ENCODE measurements at regions of chr1 and their contacts with region 1.

Region 1: GRCh38 chr1:111755331-111756123 is at the start of gene DDX20:
- DNase-seq: peak; percentile 95
- H3K4me3 ChIP-seq: peak within 1 kb of the TSS; percentile 58 to 87 (median 74)
- H3K27ac ChIP-seq: peak within 1 kb of the TSS; percentile 87 to 96 (median 89)
- H3K4me1 ChIP-seq: peaks cover 0 to 33% (median 22%) of the 10 kb centered on the region in 4 donors
- H3K27me3 ChIP-seq: no peaks in the 10 kb centered on the region
- CTCF ChIP-seq: peak; percentile 79 to 97 (median 86)
- EP300 ChIP-seq: no peak
- POLR2A ChIP-seq: peak; percentile 61
- total RNA-seq, gene DDX20: 7.1 to 17.1 (median 12.2) TPM

Region 2: GRCh38 chr1:111222308-111223125 is 533.0 kb before region 1 on chr1:
- in situ Hi-C with region 1: loop called in 2 of 4 experiments (anchors 10 to 25 kb)
- intact Hi-C with region 1: no loop called
- DNase-seq: peak; percentile 86
- H3K4me3 ChIP-seq: no peak overlapping the region
- H3K27ac ChIP-seq: peak overlapping the region; percentile 8 to 48 (median 10)
- H3K4me1 ChIP-seq: peaks cover 0 to 23% (median 6%) of the 10 kb centered on the region in 4 donors
- H3K27me3 ChIP-seq: no peaks in the 10 kb centered on the region
- CTCF ChIP-seq: peak; percentile 84 to 92 (median 90)
- EP300 ChIP-seq: no peak
- POLR2A ChIP-seq: no peak

Region 3: DNA sequence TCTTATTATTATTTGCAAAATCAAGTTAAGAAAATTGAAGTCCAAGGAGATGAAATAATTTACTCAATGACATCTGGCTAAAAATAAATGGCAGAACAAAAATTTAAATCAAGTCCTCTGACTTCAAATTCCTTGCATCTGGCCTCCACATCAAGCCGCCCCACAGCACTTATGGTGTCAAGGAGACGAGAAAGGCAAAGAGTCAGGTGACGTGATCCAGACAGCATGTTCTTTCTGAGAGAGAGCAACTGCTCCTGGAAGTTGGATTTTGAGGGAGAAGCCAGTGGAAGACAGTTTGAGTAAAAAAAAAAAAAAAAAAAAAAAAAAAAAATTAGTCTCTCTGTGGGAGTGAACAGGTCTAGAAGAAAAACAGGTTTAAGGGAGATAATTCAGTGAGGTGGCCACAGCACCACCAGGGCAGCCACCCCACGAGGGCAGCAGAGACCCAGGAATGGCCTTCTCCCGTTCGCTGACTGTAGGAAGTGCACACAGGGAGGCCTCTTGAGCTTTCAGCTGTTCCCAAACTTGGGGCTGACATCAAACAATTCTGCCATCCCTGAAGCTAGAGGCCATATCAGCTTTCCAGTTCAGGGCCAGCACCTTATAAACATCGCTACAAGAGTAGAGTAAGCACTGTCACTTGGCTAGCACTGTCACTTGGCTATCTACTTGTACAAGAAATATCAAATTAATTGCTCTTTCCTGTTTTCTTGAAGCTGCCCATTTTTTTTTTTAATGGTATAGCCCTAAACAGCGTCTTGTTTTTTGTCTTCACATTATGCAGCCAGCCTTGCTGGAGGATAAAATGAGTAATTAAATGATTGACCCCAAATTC is 273.9 kb before region 1 on chr1:
- in situ Hi-C with region 1: loop called in 2 of 4 experiments (anchors 10 kb)
- intact Hi-C with region 1: no loop called
- DNase-seq: peak; percentile 79
- H3K4me3 ChIP-seq: no peak overlapping the region
- H3K27ac ChIP-seq: peak overlapping the region in 2 of 4 donors; percentile 19 to 33
- H3K4me1 ChIP-seq: peaks cover 0 to 11% (median 2%) of the 10 kb centered on the region in 4 donors
- H3K27me3 ChIP-seq: no peaks in the 10 kb centered on the region
- CTCF ChIP-seq: peak; percentile 63 to 85 (median 68)
- EP300 ChIP-seq: no peak
- POLR2A ChIP-seq: no peak

Region 4: DNA sequence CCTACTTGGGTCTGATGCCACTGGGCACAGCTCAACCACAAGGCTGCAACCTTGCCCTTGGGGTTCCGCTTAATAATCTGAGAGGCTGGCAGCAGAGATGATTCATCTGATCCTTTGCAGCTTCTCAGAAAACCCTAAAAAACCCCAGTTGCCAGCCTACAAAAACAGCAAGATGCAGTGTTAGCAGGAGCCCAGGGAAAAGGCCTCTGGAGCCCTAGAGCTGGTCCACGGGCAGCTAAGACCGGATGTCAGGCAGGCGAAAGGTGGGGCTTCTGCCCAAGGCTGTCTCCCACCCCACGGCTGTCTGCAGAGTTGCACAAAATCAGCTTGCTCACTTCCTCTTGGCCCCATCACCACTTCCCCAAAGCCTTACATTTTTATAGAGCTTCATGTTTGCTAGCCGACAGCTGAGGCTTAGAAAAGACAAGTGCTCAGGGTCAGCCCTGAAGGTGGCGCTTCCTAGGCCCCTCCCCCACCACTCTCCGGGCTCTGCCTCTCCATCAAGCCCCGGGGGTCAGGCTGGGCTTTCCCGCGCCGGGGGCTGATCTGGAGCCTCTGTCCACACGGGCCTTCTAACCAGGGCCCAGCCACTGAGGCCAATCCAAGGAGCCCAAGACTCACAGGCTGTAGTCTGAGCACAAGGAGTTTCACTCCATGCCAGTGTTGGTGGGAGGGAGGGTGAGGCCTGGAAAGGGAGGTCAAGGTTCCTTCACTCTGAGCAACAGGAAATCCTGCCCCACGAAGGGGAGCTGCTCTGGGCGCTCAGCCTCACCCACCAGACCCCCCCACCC is 247.9 kb before region 1 on chr1:
- in situ Hi-C with region 1: loop called in 2 of 4 experiments (anchors 10 kb)
- intact Hi-C with region 1: loop called (anchors 10 kb)
- DNase-seq: peak; percentile 84
- H3K4me3 ChIP-seq: peak overlapping the region in 3 of 4 donors; percentile 19 to 46 (median 30)
- H3K27ac ChIP-seq: peak overlapping the region; percentile 91 to 98 (median 98)
- H3K4me1 ChIP-seq: peaks cover 21 to 52% (median 37%) of the 10 kb centered on the region in 4 donors
- H3K27me3 ChIP-seq: no peaks in the 10 kb centered on the region
- CTCF ChIP-seq: no peak
- EP300 ChIP-seq: no peak
- POLR2A ChIP-seq: no peak

Region 5: DNA sequence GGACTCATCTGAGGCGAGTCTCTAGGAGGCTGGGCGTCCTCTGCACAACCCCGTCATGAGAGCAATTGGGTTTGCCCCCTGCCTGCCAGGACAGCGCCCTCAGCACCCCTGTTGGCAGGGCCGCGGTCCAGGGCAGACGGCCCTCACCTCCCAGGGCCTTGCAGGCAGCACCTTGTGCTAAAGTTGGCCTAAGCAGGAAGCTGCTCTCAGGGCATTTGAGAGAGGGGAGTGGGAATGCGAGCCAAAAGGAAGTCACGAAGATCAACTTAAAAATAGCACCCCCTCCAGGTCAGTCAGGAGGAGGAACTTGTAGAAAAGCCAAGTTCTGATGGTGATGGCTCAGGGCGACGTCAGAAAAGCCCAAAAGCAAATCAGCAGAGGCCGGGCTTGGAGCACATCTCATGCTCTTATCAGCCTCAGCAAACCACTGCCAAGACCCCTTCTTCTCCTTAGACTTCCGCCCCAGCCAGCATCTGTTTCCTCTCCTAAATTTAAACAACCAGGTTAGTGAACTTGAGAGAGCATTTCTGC is 239.5 kb before region 1 on chr1:
- in situ Hi-C with region 1: loop called in 1 of 4 experiments (anchors 10 kb)
- intact Hi-C with region 1: no loop called
- DNase-seq: peak; percentile 37
- H3K4me3 ChIP-seq: peak overlapping the region; percentile 4 to 43 (median 18)
- H3K27ac ChIP-seq: peak overlapping the region; percentile 68 to 79 (median 72)
- H3K4me1 ChIP-seq: peaks cover 0 to 16% (median 8%) of the 10 kb centered on the region in 4 donors
- H3K27me3 ChIP-seq: no peaks in the 10 kb centered on the region
- CTCF ChIP-seq: peak in 1 of 5 experiments; percentile 6
- EP300 ChIP-seq: no peak
- POLR2A ChIP-seq: no peak

Measured in transverse colon (tissue), 4 donors.